Endothelial cell of umbilical vein (primary cell): ENCODE measurements at regions of chr4 and their contacts with region 1.

Region 1: GRCh38 chr4:183074296-183074990 is 24.6 kb upstream of the WWC2 start:
- DNase-seq: no peak
- H3K4me3 ChIP-seq: no peak overlapping the region
- H3K27ac ChIP-seq: no peak overlapping the region
- H3K4me1 ChIP-seq: peaks cover 4% of the 10 kb centered on the region
- H3K27me3 ChIP-seq: no peaks in the 10 kb centered on the region
- CTCF ChIP-seq: no peak
- POLR2A ChIP-seq: no peak

Region 2: GRCh38 chr4:181143250-181143854 is 1931.1 kb before region 1 on chr4:
- CTCF ChIA-PET with region 1: no interaction called
- POLR2A ChIA-PET with region 1: no interaction called
- dilution Hi-C with region 1: no loop called
- intact Hi-C with region 1: loop called (anchors 10 kb)
- DNase-seq: peak; percentile 60
- H3K4me3 ChIP-seq: no peak overlapping the region
- H3K27ac ChIP-seq: no peak overlapping the region
- H3K4me1 ChIP-seq: no peaks in the 10 kb centered on the region
- H3K27me3 ChIP-seq: no peaks in the 10 kb centered on the region
- CTCF ChIP-seq: peak; percentile 72 to 75
- POLR2A ChIP-seq: no peak

Region 3: GRCh38 chr4:183241721-183242151 is 167.3 kb after region 1 on chr4:
- CTCF ChIA-PET with region 1: interaction called, 23 read pairs
- POLR2A ChIA-PET with region 1: no interaction called
- dilution Hi-C with region 1: no loop called
- intact Hi-C with region 1: no loop called
- DNase-seq: peak; percentile 23
- H3K4me3 ChIP-seq: no peak overlapping the region
- H3K27ac ChIP-seq: peak overlapping the region; percentile 69
- H3K4me1 ChIP-seq: peaks cover 10% of the 10 kb centered on the region
- H3K27me3 ChIP-seq: no peaks in the 10 kb centered on the region
- CTCF ChIP-seq: no peak
- POLR2A ChIP-seq: no peak

Region 4: DNA sequence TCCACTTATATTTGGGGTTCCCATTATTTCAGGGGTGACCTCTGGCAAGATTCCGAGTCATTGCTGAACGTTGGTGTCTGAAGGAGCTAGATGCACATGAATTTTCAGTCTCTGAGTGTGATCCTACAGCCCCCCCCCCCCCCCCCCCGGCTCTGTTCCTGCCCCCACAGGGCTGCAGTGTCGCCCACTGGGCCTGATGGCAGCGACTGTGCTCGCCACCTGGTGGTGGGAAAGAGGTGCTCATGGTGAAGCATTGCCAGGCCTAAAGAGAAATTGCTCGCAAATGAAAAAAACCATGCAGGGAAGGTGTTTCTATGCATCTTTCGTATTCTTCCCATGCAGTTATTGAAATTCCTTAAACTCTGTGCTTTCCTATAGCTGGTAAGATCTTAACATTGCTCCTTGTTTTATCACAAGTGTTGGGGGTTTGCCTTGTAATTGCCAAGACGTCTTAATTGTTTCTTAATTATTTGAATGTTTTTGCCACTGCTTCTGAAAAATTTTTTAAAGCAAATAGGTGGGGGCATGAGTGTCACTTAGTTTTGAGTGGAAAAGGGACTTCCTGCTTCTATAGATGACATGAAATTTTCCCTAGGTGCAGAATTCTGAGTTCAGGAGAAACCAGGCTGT is 182.4 kb after region 1 on chr4:
- CTCF ChIA-PET with region 1: interaction called, 228 read pairs
- POLR2A ChIA-PET with region 1: interaction called, 3 read pairs
- dilution Hi-C with region 1: no loop called
- intact Hi-C with region 1: loop called (anchors 1 kb)
- DNase-seq: peak; percentile 45
- H3K4me3 ChIP-seq: no peak overlapping the region
- H3K27ac ChIP-seq: no peak overlapping the region
- H3K4me1 ChIP-seq: no peaks in the 10 kb centered on the region
- H3K27me3 ChIP-seq: no peaks in the 10 kb centered on the region
- CTCF ChIP-seq: peak; percentile 59 to 81
- POLR2A ChIP-seq: no peak

Region 5: GRCh38 chr4:183398227-183399125 is 324.0 kb after region 1 on chr4:
- CTCF ChIA-PET with region 1: interaction called, 4 read pairs
- POLR2A ChIA-PET with region 1: no interaction called
- dilution Hi-C with region 1: no loop called
- intact Hi-C with region 1: loop called (anchors 2 kb)
- DNase-seq: peak; percentile 79
- H3K4me3 ChIP-seq: peak overlapping the region; percentile 8 to 43 (median 36)
- H3K27ac ChIP-seq: no peak overlapping the region
- H3K4me1 ChIP-seq: peaks cover 6% of the 10 kb centered on the region
- H3K27me3 ChIP-seq: no peaks in the 10 kb centered on the region
- CTCF ChIP-seq: peak; percentile 52 to 84
- POLR2A ChIP-seq: peak; percentile 33